Caco-2 (cell line): ENCODE measurements at regions of chr14 and their contacts with region 1.

Region 1: DNA sequence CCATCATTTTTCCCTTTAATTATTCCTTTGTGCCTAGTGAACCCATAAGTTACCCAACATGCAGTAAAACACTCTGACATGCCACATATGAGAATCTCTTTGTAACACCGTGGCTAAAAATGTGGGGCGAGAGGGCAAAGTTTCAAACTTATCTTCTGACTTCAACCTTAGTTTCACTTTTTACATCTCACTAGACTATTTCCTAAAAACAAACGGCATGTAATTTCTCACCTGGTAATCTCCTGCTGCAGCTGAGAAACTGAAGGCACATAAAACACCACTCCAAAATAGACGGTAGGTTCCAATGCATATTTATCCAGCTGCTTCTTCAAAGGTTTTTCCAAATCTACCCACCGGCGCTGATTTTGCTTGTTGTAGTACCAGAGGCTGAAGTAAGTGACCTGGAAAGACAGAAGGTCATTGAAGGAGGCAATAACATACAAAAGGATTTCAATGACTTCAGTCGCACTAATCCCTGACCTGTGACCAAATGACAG is 37.9 kb downstream of the PTPN21 start:
- DNase-seq: peak; percentile 72 to 76
- H3K4me3 ChIP-seq: peak overlapping the region; percentile 27
- H3K4me3 Mint-ChIP-seq: peak overlapping the region; percentile 78
- H3K27ac Mint-ChIP-seq: peak overlapping the region; percentile 94
- H3K4me1 ChIP-seq: peaks cover 50% of the 10 kb centered on the region
- H3K4me1 Mint-ChIP-seq: peaks cover 26% of the 10 kb centered on the region
- H3K27me3 ChIP-seq: no peaks in the 10 kb centered on the region
- H3K27me3 Mint-ChIP-seq: no peaks in the 10 kb centered on the region
- CTCF ChIP-seq: no peak

Region 2: DNA sequence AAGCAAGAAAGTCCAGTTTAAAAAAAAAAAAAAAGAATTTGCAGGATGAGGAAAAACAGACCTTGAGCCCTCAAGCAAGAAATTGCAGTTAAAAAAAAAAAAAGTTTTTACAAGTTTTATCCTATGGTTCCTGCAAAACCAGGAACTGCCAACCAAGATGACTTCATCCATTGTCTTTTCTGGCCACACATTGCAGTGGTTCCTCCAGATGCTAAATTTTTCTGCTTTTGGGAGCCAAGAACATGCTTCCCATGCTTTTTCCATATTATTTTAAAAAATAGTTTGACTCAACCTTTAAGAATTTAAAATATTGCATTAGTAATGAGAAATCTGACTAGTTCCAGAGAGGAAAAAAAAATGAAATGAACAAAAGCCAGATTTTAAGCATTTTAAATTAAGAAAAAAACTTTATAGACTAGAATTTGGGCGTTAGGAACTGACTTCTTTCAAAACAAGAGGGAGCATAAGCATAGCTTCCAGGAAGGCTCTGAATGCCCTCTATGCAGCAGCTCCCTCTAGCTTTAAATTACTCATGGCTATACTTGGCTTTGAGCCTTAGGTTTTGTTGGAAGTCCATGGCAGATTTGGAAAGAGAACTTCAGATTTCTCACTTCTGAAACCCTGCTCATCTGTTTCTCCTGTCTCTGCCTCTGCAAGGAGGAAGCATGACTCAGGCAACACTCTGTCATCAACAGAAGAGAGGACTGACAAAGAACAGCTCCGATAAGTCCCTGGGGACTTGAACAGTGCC is 387.4 kb before region 1 on chr14:
- CTCF ChIA-PET with region 1: no interaction called
- POLR2A ChIA-PET with region 1: no interaction called
- intact Hi-C with region 1: no loop called
- DNase-seq: no peak
- H3K4me3 ChIP-seq: no peak overlapping the region
- H3K4me3 Mint-ChIP-seq: no peak overlapping the region
- H3K27ac Mint-ChIP-seq: no peak overlapping the region
- H3K4me1 ChIP-seq: no peaks in the 10 kb centered on the region
- H3K4me1 Mint-ChIP-seq: no peaks in the 10 kb centered on the region
- H3K27me3 ChIP-seq: no peaks in the 10 kb centered on the region
- H3K27me3 Mint-ChIP-seq: peaks cover 9% of the 10 kb centered on the region
- CTCF ChIP-seq: no peak

Region 3: DNA sequence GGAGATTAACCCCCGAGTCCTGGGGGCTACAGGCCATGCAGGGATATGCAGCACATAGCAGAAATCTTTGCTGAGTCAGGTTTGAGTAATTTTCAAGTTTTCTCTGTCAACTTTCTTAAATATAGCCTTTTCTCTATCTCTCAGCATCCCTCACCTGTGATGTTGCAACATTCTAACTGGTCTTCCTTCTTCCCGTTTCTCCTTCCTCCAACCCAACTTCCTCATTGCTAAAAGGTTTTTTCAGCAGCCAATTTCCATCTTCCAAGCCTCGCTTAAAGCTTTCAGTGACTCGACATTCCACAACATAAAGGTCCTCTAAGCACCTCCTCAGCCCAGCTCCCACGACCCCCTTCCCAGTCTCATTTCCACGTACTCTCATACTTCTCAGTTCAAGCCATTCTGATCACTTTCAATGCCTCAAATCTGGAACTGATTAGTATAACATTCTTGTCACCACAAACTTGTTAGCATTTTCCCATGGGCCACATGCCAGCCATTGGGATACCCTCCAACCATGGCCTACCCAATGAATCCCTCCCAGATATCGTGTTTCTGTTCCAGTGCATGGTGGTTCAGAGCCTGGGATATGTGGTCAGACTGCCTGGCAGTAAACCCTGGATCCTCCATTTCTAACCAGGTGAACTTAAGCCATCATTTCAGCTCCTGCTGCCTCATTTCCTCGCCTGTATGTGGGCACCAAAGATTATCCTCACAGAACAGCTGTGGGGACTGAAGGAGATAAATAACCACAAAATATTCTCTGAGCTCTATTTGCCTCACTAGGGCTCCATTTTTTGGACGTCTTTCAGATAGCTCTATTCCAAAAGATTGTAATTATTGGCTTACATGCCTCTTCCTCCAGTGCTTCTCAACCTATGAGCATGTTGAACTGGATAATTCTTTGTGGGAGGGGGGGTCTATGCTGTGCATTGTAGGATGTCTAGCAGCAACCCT is 259.6 kb before region 1 on chr14:
- CTCF ChIA-PET with region 1: interaction called, 14 read pairs
- POLR2A ChIA-PET with region 1: no interaction called
- intact Hi-C with region 1: no loop called
- DNase-seq: no peak
- H3K4me3 ChIP-seq: no peak overlapping the region
- H3K4me3 Mint-ChIP-seq: no peak overlapping the region
- H3K27ac Mint-ChIP-seq: no peak overlapping the region
- H3K4me1 ChIP-seq: no peaks in the 10 kb centered on the region
- H3K4me1 Mint-ChIP-seq: no peaks in the 10 kb centered on the region
- H3K27me3 ChIP-seq: no peaks in the 10 kb centered on the region
- H3K27me3 Mint-ChIP-seq: no peaks in the 10 kb centered on the region
- CTCF ChIP-seq: no peak

Region 4: GRCh38 chr14:88321692-88322503 is 195.0 kb before region 1 on chr14:
- CTCF ChIA-PET with region 1: no interaction called
- POLR2A ChIA-PET with region 1: no interaction called
- intact Hi-C with region 1: no loop called
- DNase-seq: no peak
- H3K4me3 ChIP-seq: no peak overlapping the region
- H3K4me3 Mint-ChIP-seq: no peak overlapping the region
- H3K27ac Mint-ChIP-seq: no peak overlapping the region
- H3K4me1 ChIP-seq: peaks cover 7% of the 10 kb centered on the region
- H3K4me1 Mint-ChIP-seq: no peaks in the 10 kb centered on the region
- H3K27me3 ChIP-seq: no peaks in the 10 kb centered on the region; the same call in none of the 2 replicates
- H3K27me3 Mint-ChIP-seq: peaks cover 13% of the 10 kb centered on the region
- CTCF ChIP-seq: no peak

Region 5: GRCh38 chr14:88470542-88471440 is 46.1 kb before region 1 on chr14:
- CTCF ChIA-PET with region 1: no interaction called
- POLR2A ChIA-PET with region 1: no interaction called
- intact Hi-C with region 1: loop called (anchors 1 kb)
- DNase-seq: no peak
- H3K4me3 ChIP-seq: no peak overlapping the region
- H3K4me3 Mint-ChIP-seq: no peak overlapping the region
- H3K27ac Mint-ChIP-seq: no peak overlapping the region
- H3K4me1 ChIP-seq: peaks cover 23% of the 10 kb centered on the region
- H3K4me1 Mint-ChIP-seq: peaks cover 12% of the 10 kb centered on the region
- H3K27me3 ChIP-seq: no peaks in the 10 kb centered on the region
- H3K27me3 Mint-ChIP-seq: no peaks in the 10 kb centered on the region
- CTCF ChIP-seq: no peak

Region 6: DNA sequence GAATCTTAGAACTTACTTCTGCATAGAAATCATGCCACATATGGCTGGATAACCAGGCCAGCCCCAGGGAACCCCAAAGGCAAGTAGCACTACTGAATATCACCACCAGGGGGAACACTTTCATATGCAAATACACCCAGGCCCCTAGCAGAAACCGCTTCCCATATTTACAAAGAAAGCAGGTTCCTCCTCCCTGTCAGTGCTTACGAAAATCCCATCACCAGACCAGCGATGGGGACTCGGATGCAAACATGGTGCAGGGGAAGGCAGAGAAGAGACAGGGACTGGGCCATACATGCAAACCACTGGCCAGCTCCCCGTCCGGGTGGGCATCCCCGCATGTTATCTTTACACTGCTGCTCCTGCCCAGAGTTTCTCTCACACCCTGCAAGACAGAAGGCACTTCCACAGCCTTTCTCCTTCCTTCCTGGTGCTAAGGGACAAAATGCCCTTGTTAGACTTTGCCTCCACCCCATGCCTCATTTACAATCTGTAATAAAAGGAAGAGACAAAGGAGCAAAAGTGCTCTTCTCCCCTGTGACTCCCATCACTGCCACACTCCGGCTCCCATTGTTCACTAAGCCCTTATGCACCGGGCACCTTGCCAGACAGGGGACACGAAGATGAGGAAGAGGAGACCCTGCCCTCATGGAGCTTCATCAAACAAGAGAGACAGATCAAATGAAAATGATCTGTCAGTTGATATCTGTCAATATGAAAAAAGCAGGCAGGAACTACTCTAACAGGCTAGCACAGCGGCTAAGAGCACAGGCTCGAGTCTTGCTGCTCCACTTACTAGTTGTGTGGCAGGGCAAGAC is 24.4 kb before region 1 on chr14:
- CTCF ChIA-PET with region 1: no interaction called
- POLR2A ChIA-PET with region 1: no interaction called
- intact Hi-C with region 1: loop called (anchors 1 kb)
- DNase-seq: peak; percentile 73 to 88
- H3K4me3 ChIP-seq: no peak overlapping the region
- H3K4me3 Mint-ChIP-seq: no peak overlapping the region
- H3K27ac Mint-ChIP-seq: peak overlapping the region; percentile 7
- H3K4me1 ChIP-seq: peaks cover 14% of the 10 kb centered on the region; the same call in 1 of the 2 replicates
- H3K4me1 Mint-ChIP-seq: peaks cover 19% of the 10 kb centered on the region
- H3K27me3 ChIP-seq: no peaks in the 10 kb centered on the region
- H3K27me3 Mint-ChIP-seq: no peaks in the 10 kb centered on the region
- CTCF ChIP-seq: peak; percentile 79 to 88

Region 7: DNA sequence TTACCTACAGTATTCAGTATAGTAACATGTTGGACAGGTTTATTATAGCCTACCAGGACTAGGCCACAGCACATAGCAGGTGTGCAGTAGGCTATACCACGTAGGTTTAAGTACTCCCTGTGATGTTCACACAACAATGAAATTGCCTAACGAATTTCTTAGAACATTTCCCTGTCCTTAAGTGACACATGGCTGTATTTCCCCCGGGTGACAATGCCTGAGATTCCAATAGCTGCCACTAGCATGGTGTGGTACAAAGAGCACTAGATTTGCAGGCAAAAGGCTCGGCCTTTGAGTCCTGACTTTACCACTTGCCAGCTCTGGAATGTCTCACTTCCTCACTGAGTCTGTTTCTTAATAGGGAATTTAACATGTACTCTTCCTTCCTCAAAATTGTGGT is 18.2 kb after region 1 on chr14:
- CTCF ChIA-PET with region 1: no interaction called
- POLR2A ChIA-PET with region 1: no interaction called
- intact Hi-C with region 1: loop called (anchors 1 kb)
- DNase-seq: peak; percentile 72 to 79
- H3K4me3 ChIP-seq: no peak overlapping the region
- H3K4me3 Mint-ChIP-seq: no peak overlapping the region
- H3K27ac Mint-ChIP-seq: peak overlapping the region; percentile 13
- H3K4me1 ChIP-seq: peaks cover 34% of the 10 kb centered on the region
- H3K4me1 Mint-ChIP-seq: peaks cover 11% of the 10 kb centered on the region
- H3K27me3 ChIP-seq: no peaks in the 10 kb centered on the region
- H3K27me3 Mint-ChIP-seq: no peaks in the 10 kb centered on the region
- CTCF ChIP-seq: peak; percentile 34 to 45

Region 8: DNA sequence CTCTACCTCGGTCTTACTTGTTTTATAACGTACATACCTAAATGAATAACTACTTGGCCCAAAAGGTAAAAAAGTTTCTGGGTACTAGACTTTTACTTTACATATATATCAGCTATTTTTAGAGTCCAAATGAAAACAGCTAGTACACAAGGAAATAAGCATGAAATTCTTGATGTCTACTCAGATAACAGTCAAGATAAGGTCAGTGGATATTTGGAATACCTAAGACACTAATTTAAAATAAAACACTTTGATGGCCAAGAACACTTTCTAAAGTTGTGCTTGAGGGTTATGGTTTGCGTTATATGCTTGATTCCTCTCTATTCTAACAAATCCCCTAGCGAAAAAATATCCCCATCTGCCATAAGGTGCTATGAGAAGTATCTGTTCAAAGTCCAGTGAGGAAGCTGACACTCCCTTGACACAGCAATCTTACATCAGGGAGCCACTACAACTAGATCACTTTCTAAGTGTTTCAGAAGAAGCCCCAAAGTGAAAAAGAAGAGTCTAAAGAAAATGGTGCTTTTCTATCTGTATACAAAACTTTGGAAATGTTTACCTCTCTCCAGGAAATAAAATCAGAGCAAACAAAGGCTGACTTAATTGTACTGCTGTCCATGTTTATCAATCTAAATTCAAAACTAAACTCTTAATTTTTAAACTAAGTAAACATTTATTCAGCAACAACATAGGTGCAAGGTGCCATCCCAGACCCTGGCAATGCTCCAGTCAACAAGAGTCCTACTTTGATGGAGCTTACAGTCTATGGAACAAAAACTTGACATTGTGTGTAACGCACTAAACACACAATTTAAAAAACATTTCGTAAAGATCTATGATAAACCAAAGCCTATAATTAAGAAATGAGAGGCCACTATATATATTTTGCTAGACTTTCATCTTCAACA is 26.2 kb after region 1 on chr14:
- CTCF ChIA-PET with region 1: no interaction called
- POLR2A ChIA-PET with region 1: no interaction called
- intact Hi-C with region 1: loop called (anchors 1 kb)
- DNase-seq: no peak
- H3K4me3 ChIP-seq: no peak overlapping the region
- H3K4me3 Mint-ChIP-seq: peak overlapping the region; percentile 58
- H3K27ac Mint-ChIP-seq: peak overlapping the region; percentile 94
- H3K4me1 ChIP-seq: peaks cover 33% of the 10 kb centered on the region
- H3K4me1 Mint-ChIP-seq: peaks cover 27% of the 10 kb centered on the region
- H3K27me3 ChIP-seq: no peaks in the 10 kb centered on the region
- H3K27me3 Mint-ChIP-seq: no peaks in the 10 kb centered on the region
- CTCF ChIP-seq: no peak

Region 9: GRCh38 chr14:88551094-88551870 is 34.4 kb after region 1 on chr14:
- CTCF ChIA-PET with region 1: no interaction called
- POLR2A ChIA-PET with region 1: no interaction called
- intact Hi-C with region 1: loop called (anchors 2 kb)
- DNase-seq: peak; percentile 80 to 82
- H3K4me3 ChIP-seq: peak overlapping the region; percentile 48
- H3K4me3 Mint-ChIP-seq: peak overlapping the region; percentile 85
- H3K27ac Mint-ChIP-seq: no peak overlapping the region
- H3K4me1 ChIP-seq: peaks cover 43% of the 10 kb centered on the region
- H3K4me1 Mint-ChIP-seq: peaks cover 24% of the 10 kb centered on the region
- H3K27me3 ChIP-seq: no peaks in the 10 kb centered on the region
- H3K27me3 Mint-ChIP-seq: no peaks in the 10 kb centered on the region
- CTCF ChIP-seq: peak; percentile 13 to 28